ENCODE measurements at regions of chr2 and their contacts with region 1.

Region 1: GRCh38 chr2:68185541-68186164 is 28.0 kb downstream of the PNO1 start:
- DNase-seq: peak in 3 of 5 donors; percentile 15 to 39 (median 24)
- ATAC-seq: no peak
- H3K4me3 ChIP-seq: no peak overlapping the region
- H3K27ac ChIP-seq: no peak overlapping the region
- H3K4me1 ChIP-seq: peaks cover 0 to 18% (median 3%) of the 10 kb centered on the region in 12 donors
- H3K27me3 ChIP-seq: no peaks in the 10 kb centered on the region
- CTCF ChIP-seq: peak; percentile 27 to 62 (median 52)
- POLR2A ChIP-seq: no peak

Region 2: GRCh38 chr2:68251187-68251854 is 65.7 kb after region 1 on chr2:
- intact Hi-C with region 1: no loop called
- DNase-seq: peak; percentile 71 to 79 (median 75)
- ATAC-seq: peak; percentile 53 to 69 (median 61)
- H3K4me3 ChIP-seq: peak overlapping the region; percentile 45 to 93 (median 80)
- H3K27ac ChIP-seq: peak overlapping the region; percentile 89 to 97 (median 94)
- H3K4me1 ChIP-seq: peaks cover 9 to 73% (median 53%) of the 10 kb centered on the region in 12 donors
- H3K27me3 ChIP-seq: no peaks in the 10 kb centered on the region
- CTCF ChIP-seq: peak; percentile 47 to 78 (median 68)
- POLR2A ChIP-seq: no peak

Region 3: GRCh38 chr2:68282811-68283418 is 97.3 kb after region 1 on chr2:
- intact Hi-C with region 1: loop called in 5 of 10 experiments (anchors 10 kb)
- DNase-seq: no peak
- ATAC-seq: no peak
- H3K4me3 ChIP-seq: no peak overlapping the region
- H3K27ac ChIP-seq: no peak overlapping the region
- H3K4me1 ChIP-seq: peaks cover 0 to 34% (median 7%) of the 10 kb centered on the region in 12 donors
- H3K27me3 ChIP-seq: no peaks in the 10 kb centered on the region
- CTCF ChIP-seq: peak; percentile 58 to 80 (median 74)
- POLR2A ChIP-seq: no peak

Measured in heart left ventricle (tissue), 16 donors.